ENCODE measurements at regions of chr19 and their contacts with region 1.

Region 1: GRCh38 chr19:49148784-49149651 is 6.2 kb downstream of the HRC start:
- DNase-seq: peak; percentile 93
- H3K4me3 Mint-ChIP-seq: peak overlapping the region; percentile 51
- H3K27ac Mint-ChIP-seq: no peak overlapping the region
- H3K4me1 Mint-ChIP-seq: peaks cover 24% of the 10 kb centered on the region
- H3K27me3 Mint-ChIP-seq: peaks cover 74% of the 10 kb centered on the region

Region 2: DNA sequence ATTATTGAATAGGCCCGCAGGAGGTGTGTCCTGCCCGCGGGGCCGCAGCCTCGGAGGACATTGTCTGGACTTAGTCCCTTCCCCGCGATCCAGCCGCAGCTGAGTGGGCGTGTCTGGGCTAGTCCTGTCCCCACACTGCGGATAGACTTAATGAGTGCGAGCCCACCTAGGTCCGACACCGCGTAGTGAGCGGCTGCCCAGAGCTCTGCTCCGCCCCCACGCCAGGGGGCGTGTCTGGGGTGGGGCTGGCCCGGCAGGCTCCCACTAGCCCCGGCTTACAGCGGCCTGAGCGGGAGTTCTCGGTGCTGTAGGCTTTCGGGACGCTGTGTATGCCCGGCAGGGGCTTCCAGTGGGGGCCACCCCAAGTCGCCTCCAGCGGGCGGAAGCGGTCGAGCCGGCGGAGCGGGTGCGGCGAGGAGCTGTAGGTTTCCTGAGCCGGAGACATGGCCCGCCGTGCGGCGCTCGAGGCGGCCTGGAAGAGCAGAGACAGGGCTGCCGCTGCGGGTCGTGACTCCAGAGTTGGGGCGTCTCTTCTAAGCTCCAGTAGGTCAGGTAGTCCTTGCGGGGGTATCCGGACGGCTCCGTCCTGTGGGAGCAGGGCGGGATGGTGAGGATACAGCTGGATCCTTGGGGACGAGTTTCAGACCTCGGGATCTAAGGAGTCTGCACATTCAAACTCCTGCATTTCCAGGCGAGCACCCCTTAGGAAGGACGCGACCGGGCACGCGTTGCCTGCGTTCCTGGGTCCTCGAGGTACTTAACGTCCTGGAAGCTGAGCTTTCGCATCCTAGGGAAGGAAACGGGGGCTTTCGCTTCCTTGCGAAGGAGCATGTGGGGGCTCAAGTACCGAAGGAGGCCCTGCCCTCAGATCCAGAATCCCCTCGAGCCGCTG is 92.8 kb before region 1 on chr19:
- CTCF ChIA-PET with region 1: no interaction called
- intact Hi-C with region 1: loop called (anchors 5 kb)
- DNase-seq: peak; percentile 67
- H3K4me3 Mint-ChIP-seq: peak overlapping the region; percentile 71
- H3K27ac Mint-ChIP-seq: no peak overlapping the region
- H3K4me1 Mint-ChIP-seq: peaks cover 22% of the 10 kb centered on the region
- H3K27me3 Mint-ChIP-seq: peaks cover 39% of the 10 kb centered on the region

Region 3: DNA sequence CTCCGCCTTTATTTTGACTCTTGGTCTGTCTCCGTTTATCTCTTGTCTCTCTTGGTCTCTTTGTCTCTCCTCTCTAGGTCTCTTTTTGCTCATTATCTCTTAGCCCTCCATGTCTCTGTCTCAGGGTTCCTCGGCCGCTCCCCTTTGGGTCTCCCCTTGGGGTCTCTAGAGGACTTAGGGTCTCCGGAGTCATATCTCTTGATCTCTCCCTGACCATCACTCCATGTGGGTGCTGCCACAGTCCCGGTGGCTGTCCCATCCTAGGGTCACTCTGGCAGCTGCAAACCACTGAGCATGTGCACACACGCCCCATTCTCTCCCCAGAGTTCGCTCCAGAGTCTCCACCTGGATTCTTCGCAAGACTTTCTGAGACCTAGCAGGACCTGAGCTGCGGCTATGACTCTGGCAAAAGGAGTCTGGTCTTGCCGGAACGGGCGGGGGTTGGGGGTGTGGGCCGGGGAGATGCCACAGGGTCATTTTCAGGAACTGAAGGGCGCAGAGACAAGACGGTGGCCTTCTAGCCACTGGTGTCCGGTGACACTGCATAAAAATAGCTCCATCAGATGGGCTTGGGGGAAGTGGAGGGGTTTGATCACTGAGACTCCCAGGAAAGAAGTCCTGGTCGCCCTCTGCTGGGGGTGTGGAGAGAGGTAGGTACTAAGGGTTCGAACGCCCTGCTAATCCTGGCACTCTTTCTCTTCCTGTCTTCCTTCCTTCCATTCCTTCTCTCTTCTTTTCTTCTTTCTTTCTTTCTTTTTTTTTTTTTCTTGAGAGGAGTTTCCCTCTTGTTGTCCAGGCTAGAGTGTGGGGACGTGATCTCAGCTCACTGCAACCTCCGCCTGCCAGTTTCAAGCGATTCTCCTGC is 75.3 kb before region 1 on chr19:
- CTCF ChIA-PET with region 1: interaction called, 4 read pairs
- intact Hi-C with region 1: loop called (anchors 2 kb)
- DNase-seq: peak; percentile 26
- H3K4me3 Mint-ChIP-seq: no peak overlapping the region
- H3K27ac Mint-ChIP-seq: no peak overlapping the region
- H3K4me1 Mint-ChIP-seq: peaks cover 9% of the 10 kb centered on the region
- H3K27me3 Mint-ChIP-seq: peaks cover 43% of the 10 kb centered on the region

Region 4: GRCh38 chr19:49097455-49098288 is 51.3 kb before region 1 on chr19:
- CTCF ChIA-PET with region 1: interaction called, 11 read pairs
- intact Hi-C with region 1: loop called (anchors 1 kb)
- DNase-seq: peak; percentile 78
- H3K4me3 Mint-ChIP-seq: no peak overlapping the region
- H3K27ac Mint-ChIP-seq: no peak overlapping the region
- H3K4me1 Mint-ChIP-seq: peaks cover 4% of the 10 kb centered on the region
- H3K27me3 Mint-ChIP-seq: no peaks in the 10 kb centered on the region

Region 5: DNA sequence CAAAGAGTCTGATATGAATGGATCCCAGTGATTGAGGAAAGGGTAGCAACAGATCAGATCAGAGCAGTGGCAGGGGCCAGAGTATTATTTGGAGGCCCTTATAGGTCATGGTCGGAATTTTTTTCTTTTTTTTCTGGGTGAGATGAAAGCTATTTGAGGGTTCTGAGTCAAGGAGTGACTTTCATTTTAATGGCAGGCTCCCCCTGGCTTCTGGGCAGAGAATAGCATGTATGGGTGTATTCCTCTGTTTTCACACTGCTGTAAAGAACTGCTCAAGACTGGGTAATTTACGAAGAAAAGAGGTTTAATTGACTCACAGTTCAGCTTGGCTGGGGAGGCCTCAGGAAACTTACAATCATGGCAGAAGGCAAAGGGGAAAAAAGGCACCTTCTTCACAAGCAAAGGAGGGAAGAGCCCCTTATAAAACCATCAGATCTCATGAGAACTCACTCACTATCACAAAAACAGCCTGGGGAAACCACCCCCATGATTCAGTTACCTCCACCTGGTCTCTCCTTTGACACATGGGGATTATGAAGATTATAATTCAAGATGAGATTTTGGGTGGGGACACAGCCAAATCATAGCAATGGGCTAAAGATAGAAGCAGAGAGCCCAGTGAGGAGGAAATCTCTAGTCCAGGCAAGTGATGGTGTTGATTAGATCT is 179.0 kb after region 1 on chr19:
- CTCF ChIA-PET with region 1: no interaction called
- intact Hi-C with region 1: no loop called
- DNase-seq: peak; percentile 77
- H3K4me3 Mint-ChIP-seq: no peak overlapping the region
- H3K27ac Mint-ChIP-seq: peak overlapping the region; percentile 55
- H3K4me1 Mint-ChIP-seq: peaks cover 49% of the 10 kb centered on the region
- H3K27me3 Mint-ChIP-seq: no peaks in the 10 kb centered on the region

Measured in activated naive CD4-positive, alpha-beta T cell treated with anti-CD3 and anti-CD28 coated beads for 36 hours (primary cell).